Panc1 (cell line): ENCODE measurements at regions of chr1 and their contacts with region 1.

Region 1: GRCh38 chr1:72623299-72623708 is 341.0 kb upstream of the NEGR1 start:
- DNase-seq: peak; percentile 33
- ATAC-seq: peak; percentile 48; the same call in 1 of the 2 replicates
- H3K4me3 ChIP-seq: no peak overlapping the region; a peak in 1 of 4 replicates
- H3K27ac ChIP-seq: no peak overlapping the region
- H3K4me1 ChIP-seq: no peaks in the 10 kb centered on the region
- H3K27me3 ChIP-seq: no peaks in the 10 kb centered on the region
- CTCF ChIP-seq: peak; percentile 60

Region 2: GRCh38 chr1:71908303-71908702 is 715.0 kb before region 1 on chr1:
- CTCF ChIA-PET with region 1: no interaction called
- POLR2A ChIA-PET with region 1: interaction called, 14 read pairs
- in situ Hi-C with region 1: no loop called
- intact Hi-C with region 1: no loop called
- DNase-seq: no peak
- ATAC-seq: no peak
- H3K4me3 ChIP-seq: no peak overlapping the region
- H3K27ac ChIP-seq: no peak overlapping the region
- H3K4me1 ChIP-seq: no peaks in the 10 kb centered on the region
- H3K27me3 ChIP-seq: no peaks in the 10 kb centered on the region
- CTCF ChIP-seq: no peak

Region 3: GRCh38 chr1:72432645-72433267 is 190.5 kb before region 1 on chr1:
- CTCF ChIA-PET with region 1: no interaction called
- POLR2A ChIA-PET with region 1: interaction called, 12 read pairs
- in situ Hi-C with region 1: no loop called
- intact Hi-C with region 1: no loop called
- DNase-seq: no peak
- ATAC-seq: no peak
- H3K4me3 ChIP-seq: no peak overlapping the region
- H3K27ac ChIP-seq: no peak overlapping the region
- H3K4me1 ChIP-seq: no peaks in the 10 kb centered on the region
- H3K27me3 ChIP-seq: no peaks in the 10 kb centered on the region
- CTCF ChIP-seq: no peak